Mammary epithelial cell (primary cell): ENCODE measurements at regions of chr15 and their contacts with region 1.

Region 1: DNA sequence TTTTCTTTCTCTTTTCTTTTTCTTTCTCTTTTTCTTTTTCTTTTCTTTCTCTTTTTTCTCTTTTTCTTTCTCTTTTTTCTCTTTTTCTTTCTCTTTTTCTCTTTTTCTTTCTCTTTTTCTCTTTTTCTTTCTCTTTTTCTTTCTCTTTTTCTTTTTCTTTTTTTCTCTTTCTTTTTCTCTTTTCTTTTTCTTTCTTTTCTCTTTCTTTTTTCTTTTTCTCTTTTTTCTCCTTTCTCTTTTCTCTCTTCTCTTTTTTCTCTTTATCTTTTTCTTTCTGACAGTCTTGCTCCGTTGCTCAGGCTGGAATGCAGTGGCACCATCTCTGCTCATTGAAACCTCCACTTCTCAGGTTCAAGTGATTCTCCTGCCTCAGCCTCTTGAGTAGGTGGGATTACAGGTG is 335.7 kb downstream of the SQOR start:
- DNase-seq: no peak
- H3K4me3 ChIP-seq: no peak overlapping the region
- H3K27ac ChIP-seq: no peak overlapping the region
- H3K4me1 ChIP-seq: no peaks in the 10 kb centered on the region
- H3K27me3 ChIP-seq: peaks cover 2% of the 10 kb centered on the region
- CTCF ChIP-seq: no peak

Region 2: GRCh38 chr15:46014532-46014931 is 44.0 kb after region 1 on chr15:
- CTCF ChIA-PET with region 1: no interaction called
- dilution Hi-C with region 1: no loop called
- in situ Hi-C with region 1: no loop called
- intact Hi-C with region 1: no loop called
- DNase-seq: no peak
- H3K4me3 ChIP-seq: no peak overlapping the region
- H3K27ac ChIP-seq: no peak overlapping the region
- H3K4me1 ChIP-seq: no peaks in the 10 kb centered on the region
- H3K27me3 ChIP-seq: no peaks in the 10 kb centered on the region
- CTCF ChIP-seq: no peak

Region 3: GRCh38 chr15:46077220-46077619 is 106.7 kb after region 1 on chr15:
- CTCF ChIA-PET with region 1: no interaction called
- dilution Hi-C with region 1: loop called (anchors 5 kb)
- in situ Hi-C with region 1: no loop called
- intact Hi-C with region 1: no loop called
- DNase-seq: no peak
- H3K4me3 ChIP-seq: no peak overlapping the region
- H3K27ac ChIP-seq: no peak overlapping the region
- H3K4me1 ChIP-seq: no peaks in the 10 kb centered on the region
- H3K27me3 ChIP-seq: no peaks in the 10 kb centered on the region
- CTCF ChIP-seq: no peak